CD4-positive, alpha-beta T cell (primary cell): ENCODE measurements at regions of chr7 and their contacts with region 1.

Region 1: GRCh38 chr7:138738551-138739335 is 37.6 kb upstream of the SVOPL start:
- DNase-seq: peak; percentile 74 to 95 (median 84)
- ATAC-seq: peak; percentile 97
- H3K4me3 ChIP-seq: no peak overlapping the region
- H3K4me3 Mint-ChIP-seq: no peak overlapping the region
- H3K27ac ChIP-seq: no peak overlapping the region
- H3K27ac Mint-ChIP-seq: no peak overlapping the region
- H3K4me1 ChIP-seq: no peaks in the 10 kb centered on the region
- H3K4me1 Mint-ChIP-seq: peaks cover 5% of the 10 kb centered on the region
- H3K27me3 ChIP-seq: no peaks in the 10 kb centered on the region
- H3K27me3 Mint-ChIP-seq: no peaks in the 10 kb centered on the region
- CTCF ChIP-seq: peak; percentile 93

Region 2: DNA sequence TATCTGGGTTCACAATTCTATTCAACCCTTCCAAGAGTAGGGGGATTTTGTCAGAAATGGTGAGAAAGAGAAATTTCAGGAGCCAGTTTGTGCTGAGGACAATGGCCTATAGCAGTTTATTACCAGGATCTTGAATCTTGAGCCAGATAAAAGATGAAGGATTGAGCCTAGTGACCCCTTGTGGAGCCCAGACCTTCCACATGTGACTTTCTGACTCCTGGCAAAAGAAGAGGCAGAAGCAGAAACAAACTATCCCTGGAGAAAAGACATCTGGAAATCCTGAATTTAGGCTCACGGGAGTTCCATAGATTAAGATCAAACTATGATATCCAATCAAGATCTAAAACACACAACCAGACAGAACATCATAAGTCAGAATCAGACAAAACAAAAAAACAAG is 1931.1 kb before region 1 on chr7:
- CTCF ChIA-PET with region 1: no interaction called
- POLR2A ChIA-PET with region 1: no interaction called
- intact Hi-C with region 1: no loop called
- DNase-seq: no peak
- ATAC-seq: no peak
- H3K4me3 ChIP-seq: no peak overlapping the region
- H3K4me3 Mint-ChIP-seq: no peak overlapping the region
- H3K27ac ChIP-seq: no peak overlapping the region
- H3K27ac Mint-ChIP-seq: no peak overlapping the region
- H3K4me1 ChIP-seq: no peaks in the 10 kb centered on the region
- H3K4me1 Mint-ChIP-seq: no peaks in the 10 kb centered on the region
- H3K27me3 ChIP-seq: no peaks in the 10 kb centered on the region
- H3K27me3 Mint-ChIP-seq: no peaks in the 10 kb centered on the region
- CTCF ChIP-seq: no peak

Region 3: DNA sequence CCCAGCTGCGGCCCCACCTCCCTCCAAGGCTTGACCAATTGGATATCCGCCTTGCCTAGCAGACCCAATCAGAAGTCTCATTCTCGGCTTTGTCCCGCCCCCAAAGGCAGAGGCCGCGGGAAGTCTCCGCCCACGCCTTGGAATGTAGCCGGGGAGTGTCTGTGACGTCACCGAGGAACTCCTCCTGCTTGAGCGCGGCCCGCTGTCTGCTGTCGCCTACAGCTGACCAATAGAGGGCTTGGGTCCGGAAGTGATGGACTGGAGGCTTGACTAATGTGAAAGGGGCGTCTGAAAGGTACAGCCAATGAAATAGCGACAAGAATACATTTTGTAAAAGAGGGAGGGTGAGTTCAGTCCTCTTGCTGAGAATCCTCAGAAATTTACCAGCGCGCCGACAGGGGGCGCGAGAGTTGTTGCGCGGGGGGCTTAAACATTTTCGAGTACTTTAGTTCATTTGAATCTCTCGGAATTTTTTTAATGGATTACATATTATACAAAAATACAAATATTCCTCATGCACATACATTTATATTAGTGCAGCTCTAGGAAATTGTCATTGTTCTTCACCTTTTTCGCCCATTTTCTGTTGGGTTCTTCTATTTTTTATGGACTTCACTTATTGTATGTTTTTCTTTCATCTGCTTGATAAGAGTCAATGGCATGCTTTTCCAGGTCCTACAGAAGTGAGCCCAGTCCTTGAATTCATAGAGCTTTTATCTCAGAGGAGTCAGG is 736.5 kb before region 1 on chr7:
- CTCF ChIA-PET with region 1: no interaction called
- POLR2A ChIA-PET with region 1: no interaction called
- intact Hi-C with region 1: loop called (anchors 5 kb)
- DNase-seq: peak; percentile 95 to 100 (median 97)
- ATAC-seq: peak; percentile 87
- H3K4me3 ChIP-seq: peak overlapping the region; percentile 92
- H3K4me3 Mint-ChIP-seq: peak overlapping the region; percentile 93
- H3K27ac ChIP-seq: peak overlapping the region; percentile 67 to 75
- H3K27ac Mint-ChIP-seq: peak overlapping the region; percentile 75
- H3K4me1 ChIP-seq: peaks cover 16% of the 10 kb centered on the region
- H3K4me1 Mint-ChIP-seq: peaks cover 36% of the 10 kb centered on the region
- H3K27me3 ChIP-seq: no peaks in the 10 kb centered on the region
- H3K27me3 Mint-ChIP-seq: no peaks in the 10 kb centered on the region
- CTCF ChIP-seq: peak; percentile 99

Region 4: DNA sequence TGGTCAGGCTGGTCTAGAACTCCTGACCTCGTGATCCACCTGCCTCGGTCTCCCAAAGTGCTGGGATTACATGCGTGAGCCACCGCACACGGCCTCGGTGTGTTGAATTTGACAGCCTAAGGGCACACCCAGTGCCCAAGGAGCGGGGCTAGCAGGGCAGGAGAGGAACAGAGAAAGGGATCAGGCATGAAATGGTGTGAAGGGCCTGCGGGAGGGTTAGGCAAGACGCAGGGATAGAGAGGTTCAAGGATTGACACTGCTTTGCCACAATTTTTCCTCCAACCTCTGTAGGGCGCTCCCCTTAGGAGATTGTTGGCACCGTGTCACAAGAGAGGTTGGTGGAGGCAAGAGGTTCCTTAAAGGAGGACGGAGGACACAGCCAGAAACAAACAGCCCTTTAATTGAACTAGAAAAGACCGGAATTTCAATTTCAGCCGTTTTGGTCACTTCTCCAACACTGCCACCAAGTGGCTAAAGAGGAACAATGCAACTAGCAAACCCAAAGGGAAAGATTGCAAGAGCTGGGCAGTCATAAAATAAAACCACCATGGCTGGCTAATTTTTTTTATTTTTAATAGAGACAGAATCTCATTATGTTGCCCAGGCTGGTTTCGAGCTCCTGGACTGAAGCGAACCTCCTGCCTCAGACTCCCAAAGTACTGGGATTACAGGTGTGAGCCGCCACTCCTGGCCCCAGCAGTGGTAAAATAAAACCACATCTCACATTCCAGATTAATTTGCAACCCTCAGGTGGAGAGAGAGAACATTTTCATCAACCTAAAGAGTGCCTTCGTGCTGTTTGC is 730.0 kb before region 1 on chr7:
- CTCF ChIA-PET with region 1: no interaction called
- POLR2A ChIA-PET with region 1: no interaction called
- intact Hi-C with region 1: loop called (anchors 5 kb)
- DNase-seq: peak in 8 of 14 experiments; percentile 11 to 75 (median 28)
- ATAC-seq: peak; percentile 57
- H3K4me3 ChIP-seq: no peak overlapping the region
- H3K4me3 Mint-ChIP-seq: no peak overlapping the region
- H3K27ac ChIP-seq: no peak overlapping the region
- H3K27ac Mint-ChIP-seq: no peak overlapping the region
- H3K4me1 ChIP-seq: peaks cover 5% of the 10 kb centered on the region
- H3K4me1 Mint-ChIP-seq: no peaks in the 10 kb centered on the region
- H3K27me3 ChIP-seq: no peaks in the 10 kb centered on the region
- H3K27me3 Mint-ChIP-seq: no peaks in the 10 kb centered on the region
- CTCF ChIP-seq: peak; percentile 90

Region 5: DNA sequence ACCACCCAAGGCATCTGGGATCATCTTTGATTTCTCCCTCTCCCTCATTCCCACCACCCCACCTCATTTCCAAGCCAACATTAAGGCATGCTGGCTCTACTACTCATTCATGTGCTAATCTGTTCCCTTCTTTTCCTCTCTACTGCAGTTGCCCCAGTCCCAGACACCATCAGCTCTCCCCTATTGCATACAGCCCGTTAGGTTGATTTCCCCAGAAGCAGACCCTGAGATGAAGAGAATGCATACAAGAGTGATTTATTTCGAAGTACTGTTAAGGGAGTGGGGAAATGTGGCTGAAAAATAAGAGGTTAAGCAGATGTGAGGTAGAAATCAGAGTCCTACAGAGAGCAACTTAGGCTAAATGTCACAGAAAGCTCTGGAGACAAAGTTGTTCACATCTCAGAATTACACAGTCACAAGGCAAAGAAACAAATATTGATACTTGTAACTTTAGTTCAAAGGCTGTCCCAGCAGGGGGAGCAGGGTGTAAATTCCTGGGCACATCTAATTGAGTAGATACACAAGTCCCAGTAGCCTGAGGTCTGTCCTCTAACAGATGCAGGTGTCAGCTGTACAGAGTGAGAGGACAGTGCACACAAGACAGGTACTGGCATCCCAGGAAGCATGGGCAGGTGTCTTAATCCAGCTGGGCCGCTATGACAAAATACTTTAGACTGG is 641.5 kb before region 1 on chr7:
- CTCF ChIA-PET with region 1: no interaction called
- POLR2A ChIA-PET with region 1: no interaction called
- intact Hi-C with region 1: loop called in 1 of 2 experiments (anchors 2 kb)
- DNase-seq: peak in 3 of 14 experiments; percentile 11 to 20 (median 17)
- ATAC-seq: no peak
- H3K4me3 ChIP-seq: no peak overlapping the region
- H3K4me3 Mint-ChIP-seq: no peak overlapping the region
- H3K27ac ChIP-seq: no peak overlapping the region
- H3K27ac Mint-ChIP-seq: no peak overlapping the region
- H3K4me1 ChIP-seq: no peaks in the 10 kb centered on the region
- H3K4me1 Mint-ChIP-seq: no peaks in the 10 kb centered on the region
- H3K27me3 ChIP-seq: no peaks in the 10 kb centered on the region
- H3K27me3 Mint-ChIP-seq: peaks cover 15% of the 10 kb centered on the region
- CTCF ChIP-seq: peak; percentile 12

Region 6: DNA sequence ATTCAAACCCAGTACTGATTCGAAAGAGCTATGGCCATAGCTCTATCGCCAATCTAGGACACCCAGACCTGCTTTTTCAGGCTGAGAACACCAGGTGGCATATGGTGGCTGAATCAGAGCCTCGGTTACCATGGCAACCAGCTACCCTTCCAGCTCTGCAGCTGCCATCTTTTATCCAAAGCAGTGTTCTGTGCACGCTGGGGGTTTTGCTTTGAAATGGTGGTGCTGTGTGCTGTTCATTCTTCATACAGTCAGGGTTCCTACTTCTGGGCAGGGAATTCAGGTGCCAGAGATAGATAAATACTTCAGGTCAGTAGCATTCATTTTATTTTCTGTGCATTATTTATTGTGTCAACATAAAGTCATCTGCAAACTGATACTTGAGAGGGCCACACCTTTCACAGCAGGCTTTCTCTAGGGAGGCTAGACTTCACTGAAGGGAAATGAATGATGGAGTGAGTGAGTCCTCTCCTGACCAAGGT is 577.1 kb before region 1 on chr7:
- CTCF ChIA-PET with region 1: interaction called, 15 read pairs
- POLR2A ChIA-PET with region 1: interaction called, 11 read pairs
- intact Hi-C with region 1: loop called (anchors 1 to 2 kb)
- DNase-seq: peak; percentile 51 to 94 (median 64)
- ATAC-seq: peak; percentile 100
- H3K4me3 ChIP-seq: no peak overlapping the region
- H3K4me3 Mint-ChIP-seq: no peak overlapping the region
- H3K27ac ChIP-seq: no peak overlapping the region
- H3K27ac Mint-ChIP-seq: no peak overlapping the region
- H3K4me1 ChIP-seq: no peaks in the 10 kb centered on the region
- H3K4me1 Mint-ChIP-seq: no peaks in the 10 kb centered on the region
- H3K27me3 ChIP-seq: no peaks in the 10 kb centered on the region
- H3K27me3 Mint-ChIP-seq: peaks cover 3% of the 10 kb centered on the region
- CTCF ChIP-seq: peak; percentile 70

Region 7: DNA sequence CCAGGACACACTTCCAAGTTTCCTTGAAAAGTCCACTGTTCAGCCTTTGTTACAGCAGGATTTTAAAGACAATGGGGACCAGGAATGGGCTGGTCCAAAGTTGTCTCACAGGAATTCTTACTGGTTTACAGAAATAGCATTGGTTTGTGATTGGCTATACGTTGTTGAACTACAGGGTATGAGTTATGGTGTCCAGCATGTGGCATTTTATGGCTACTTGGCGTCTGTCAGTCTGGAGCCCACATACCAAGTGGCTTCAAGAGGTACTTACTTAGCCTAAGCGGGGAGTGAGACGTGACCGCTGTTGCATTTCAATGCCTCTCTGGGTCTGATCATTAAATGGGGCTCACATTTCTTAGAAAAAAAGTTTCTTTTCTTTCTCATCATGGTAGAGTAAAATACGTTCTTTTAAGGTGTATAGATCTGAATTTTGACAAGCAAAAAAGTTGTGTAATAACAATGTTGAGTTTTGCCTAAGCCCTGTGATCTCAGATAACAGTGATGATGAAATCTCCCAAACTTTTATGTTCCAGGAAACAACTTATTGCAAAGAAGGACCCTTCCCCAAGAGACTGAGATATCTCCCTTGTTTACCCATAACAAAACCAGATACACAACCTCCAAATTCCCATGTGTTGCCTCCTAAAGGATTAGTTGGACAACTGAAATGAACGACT is 378.7 kb before region 1 on chr7:
- CTCF ChIA-PET with region 1: no interaction called
- POLR2A ChIA-PET with region 1: no interaction called
- intact Hi-C with region 1: no loop called
- DNase-seq: no peak
- ATAC-seq: no peak
- H3K4me3 ChIP-seq: no peak overlapping the region
- H3K4me3 Mint-ChIP-seq: no peak overlapping the region
- H3K27ac ChIP-seq: no peak overlapping the region
- H3K27ac Mint-ChIP-seq: no peak overlapping the region
- H3K4me1 ChIP-seq: no peaks in the 10 kb centered on the region
- H3K4me1 Mint-ChIP-seq: no peaks in the 10 kb centered on the region
- H3K27me3 ChIP-seq: no peaks in the 10 kb centered on the region
- H3K27me3 Mint-ChIP-seq: no peaks in the 10 kb centered on the region
- CTCF ChIP-seq: no peak

Region 8: DNA sequence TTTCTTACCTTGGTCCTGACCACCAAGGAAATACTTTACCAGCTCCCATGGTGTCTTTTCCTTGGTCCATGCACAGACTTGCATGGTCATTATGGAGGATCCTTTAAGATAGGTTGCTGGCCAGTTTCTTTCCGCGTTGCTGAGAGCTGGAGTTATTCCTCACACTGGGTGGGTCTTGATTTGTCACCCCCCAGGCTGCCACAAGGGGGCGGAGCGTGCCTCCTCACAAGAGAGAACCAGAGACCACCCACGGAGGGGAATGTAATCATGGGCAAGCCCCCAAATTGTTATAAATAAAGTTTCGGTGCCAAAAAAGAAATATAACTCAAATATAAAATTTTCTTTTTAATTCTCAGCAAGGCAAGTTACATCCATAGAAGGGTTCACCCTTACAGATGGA is 289.2 kb before region 1 on chr7:
- CTCF ChIA-PET with region 1: interaction called, 3 read pairs
- POLR2A ChIA-PET with region 1: no interaction called
- intact Hi-C with region 1: loop called (anchors 1 kb)
- DNase-seq: peak in 13 of 14 experiments; percentile 15 to 59 (median 35)
- ATAC-seq: no peak
- H3K4me3 ChIP-seq: no peak overlapping the region
- H3K4me3 Mint-ChIP-seq: no peak overlapping the region
- H3K27ac ChIP-seq: no peak overlapping the region
- H3K27ac Mint-ChIP-seq: no peak overlapping the region
- H3K4me1 ChIP-seq: no peaks in the 10 kb centered on the region
- H3K4me1 Mint-ChIP-seq: no peaks in the 10 kb centered on the region
- H3K27me3 ChIP-seq: no peaks in the 10 kb centered on the region
- H3K27me3 Mint-ChIP-seq: no peaks in the 10 kb centered on the region
- CTCF ChIP-seq: peak; percentile 61

Region 9: DNA sequence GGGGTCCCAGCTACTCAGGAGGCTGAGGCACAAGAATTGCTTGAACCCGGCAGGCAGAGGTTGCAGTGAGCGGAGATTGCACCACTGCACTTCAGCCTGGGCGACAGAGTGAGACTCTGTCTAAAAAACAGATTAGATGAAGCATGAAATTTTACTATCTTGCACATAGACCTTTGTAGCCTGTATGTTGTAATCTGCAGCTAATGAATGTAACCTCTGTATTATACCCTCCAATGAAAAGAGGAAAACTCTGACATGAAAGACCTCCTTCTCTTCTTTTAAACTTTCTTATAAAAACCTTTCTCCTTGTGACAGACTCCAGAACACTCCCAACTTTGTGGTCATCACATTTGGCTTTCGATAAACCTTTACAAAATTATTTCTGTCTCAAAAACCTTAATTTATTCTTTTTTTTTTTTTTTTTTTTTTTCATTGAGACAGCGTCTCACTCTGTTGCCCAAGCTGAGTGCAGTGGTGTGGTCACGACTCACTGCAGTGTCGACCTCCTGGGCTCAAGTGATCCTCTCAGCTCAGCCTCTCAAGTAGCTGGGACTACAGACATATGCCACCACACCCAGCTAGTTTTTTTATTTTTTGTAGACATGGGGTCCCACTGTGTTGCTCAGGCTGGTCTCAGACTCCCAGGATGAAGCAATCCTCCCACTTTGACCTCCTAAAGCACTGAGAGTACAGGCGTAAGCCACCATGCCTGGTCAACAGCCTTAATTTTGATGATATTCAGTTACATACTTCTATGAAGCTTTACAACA is 135.0 kb before region 1 on chr7:
- CTCF ChIA-PET with region 1: no interaction called
- POLR2A ChIA-PET with region 1: no interaction called
- intact Hi-C with region 1: no loop called
- DNase-seq: no peak
- ATAC-seq: no peak
- H3K4me3 ChIP-seq: no peak overlapping the region
- H3K4me3 Mint-ChIP-seq: no peak overlapping the region
- H3K27ac ChIP-seq: no peak overlapping the region
- H3K27ac Mint-ChIP-seq: no peak overlapping the region
- H3K4me1 ChIP-seq: no peaks in the 10 kb centered on the region
- H3K4me1 Mint-ChIP-seq: peaks cover 14% of the 10 kb centered on the region
- H3K27me3 ChIP-seq: no peaks in the 10 kb centered on the region
- H3K27me3 Mint-ChIP-seq: no peaks in the 10 kb centered on the region
- CTCF ChIP-seq: no peak

Region 10: GRCh38 chr7:138666385-138666784 is 72.4 kb before region 1 on chr7:
- CTCF ChIA-PET with region 1: no interaction called
- POLR2A ChIA-PET with region 1: no interaction called
- intact Hi-C with region 1: no loop called
- DNase-seq: no peak
- ATAC-seq: no peak
- H3K4me3 ChIP-seq: no peak overlapping the region
- H3K4me3 Mint-ChIP-seq: no peak overlapping the region
- H3K27ac ChIP-seq: no peak overlapping the region
- H3K27ac Mint-ChIP-seq: no peak overlapping the region
- H3K4me1 ChIP-seq: peaks cover 5% of the 10 kb centered on the region
- H3K4me1 Mint-ChIP-seq: peaks cover 10% of the 10 kb centered on the region
- H3K27me3 ChIP-seq: peaks cover 2 to 8% of the 10 kb centered on the region in 2 experiments
- H3K27me3 Mint-ChIP-seq: peaks cover 18% of the 10 kb centered on the region
- CTCF ChIP-seq: no peak

Region 11: DNA sequence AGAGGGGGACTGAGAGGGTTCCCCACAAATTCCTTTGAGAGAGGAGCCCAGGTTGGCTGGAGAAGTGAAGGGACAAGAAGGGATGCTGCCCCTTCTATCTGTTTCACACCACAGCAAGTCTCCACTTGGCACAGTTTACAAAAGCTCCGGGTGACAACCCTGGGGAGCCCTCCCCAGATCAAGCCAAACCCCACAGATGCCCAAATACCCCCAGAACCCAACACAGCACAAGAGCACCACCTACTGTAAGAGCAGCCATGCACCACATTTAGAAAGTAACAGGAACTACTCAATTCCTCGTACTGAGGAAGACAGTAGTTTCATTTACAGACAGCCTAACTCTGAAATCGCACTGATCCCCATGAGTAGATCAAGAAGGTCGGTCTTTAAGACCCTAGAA is 127.1 kb after region 1 on chr7:
- CTCF ChIA-PET with region 1: interaction called, 3 read pairs
- POLR2A ChIA-PET with region 1: no interaction called
- intact Hi-C with region 1: loop called (anchors 1 to 2 kb)
- DNase-seq: peak; percentile 11 to 69 (median 41)
- ATAC-seq: peak; percentile 93
- H3K4me3 ChIP-seq: no peak overlapping the region
- H3K4me3 Mint-ChIP-seq: no peak overlapping the region
- H3K27ac ChIP-seq: no peak overlapping the region
- H3K27ac Mint-ChIP-seq: no peak overlapping the region
- H3K4me1 ChIP-seq: no peaks in the 10 kb centered on the region
- H3K4me1 Mint-ChIP-seq: no peaks in the 10 kb centered on the region
- H3K27me3 ChIP-seq: no peaks in the 10 kb centered on the region
- H3K27me3 Mint-ChIP-seq: peaks cover 4% of the 10 kb centered on the region
- CTCF ChIP-seq: peak; percentile 51